ENCODE measurements at regions of chr10 and their contacts with region 1.

Region 1: GRCh38 chr10:95601116-95601719 is 40.0 kb upstream of the SORBS1 start:
- DNase-seq: peak; percentile 89
- H3K4me3 Mint-ChIP-seq: no peak overlapping the region
- H3K27ac Mint-ChIP-seq: no peak overlapping the region
- H3K4me1 Mint-ChIP-seq: no peaks in the 10 kb centered on the region
- H3K27me3 Mint-ChIP-seq: peaks cover 21% of the 10 kb centered on the region
- CTCF ChIP-seq: peak; percentile 87

Region 2: GRCh38 chr10:94997741-94998174 is 603.5 kb before region 1 on chr10:
- CTCF ChIA-PET with region 1: no interaction called
- POLR2A ChIA-PET with region 1: no interaction called
- intact Hi-C with region 1: no loop called
- DNase-seq: no peak
- H3K4me3 Mint-ChIP-seq: no peak overlapping the region
- H3K27ac Mint-ChIP-seq: no peak overlapping the region
- H3K4me1 Mint-ChIP-seq: no peaks in the 10 kb centered on the region
- H3K27me3 Mint-ChIP-seq: no peaks in the 10 kb centered on the region
- CTCF ChIP-seq: no peak

Region 3: DNA sequence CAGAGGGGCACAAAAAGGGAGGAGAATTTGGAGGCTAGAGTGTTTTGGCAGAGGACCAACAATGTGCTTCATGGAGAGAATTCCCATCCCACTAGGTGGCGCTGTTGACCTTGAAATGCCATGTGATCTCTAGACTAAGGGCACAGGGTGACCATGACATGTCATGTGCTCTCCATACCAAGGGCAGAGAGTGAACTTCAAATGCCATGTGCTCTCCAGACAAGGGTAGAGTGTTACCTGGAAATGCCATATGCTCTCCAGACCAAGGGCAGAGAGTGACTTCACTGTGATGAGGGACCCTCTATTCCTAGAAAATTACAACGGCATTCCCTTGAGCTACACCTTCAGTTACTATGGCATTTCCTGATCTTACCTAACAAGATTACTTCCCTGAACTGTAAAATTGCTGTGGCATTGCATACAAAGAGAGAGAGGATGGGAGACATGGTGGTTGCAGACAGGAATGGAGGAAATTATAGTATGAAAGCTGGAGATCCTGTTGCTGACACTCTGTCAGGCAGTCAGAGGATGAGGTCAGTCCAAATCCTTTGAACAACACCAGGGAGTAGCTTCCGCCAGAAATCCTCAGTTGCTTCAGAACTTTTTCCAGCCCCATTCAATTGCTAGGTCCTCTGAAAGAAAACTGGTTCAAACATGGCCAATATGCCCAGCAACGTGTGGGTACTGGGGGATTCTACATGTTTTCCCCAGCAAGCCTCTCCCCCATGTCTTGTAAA is 468.0 kb before region 1 on chr10:
- CTCF ChIA-PET with region 1: no interaction called
- POLR2A ChIA-PET with region 1: no interaction called
- intact Hi-C with region 1: loop called (anchors 1 kb)
- DNase-seq: peak; percentile 88
- H3K4me3 Mint-ChIP-seq: no peak overlapping the region
- H3K27ac Mint-ChIP-seq: no peak overlapping the region
- H3K4me1 Mint-ChIP-seq: no peaks in the 10 kb centered on the region
- H3K27me3 Mint-ChIP-seq: peaks cover 15% of the 10 kb centered on the region
- CTCF ChIP-seq: peak; percentile 71

Region 4: GRCh38 chr10:95388539-95388938 is 212.7 kb before region 1 on chr10:
- CTCF ChIA-PET with region 1: interaction called, 10 read pairs
- POLR2A ChIA-PET with region 1: interaction called, 3 read pairs
- intact Hi-C with region 1: no loop called
- DNase-seq: no peak
- H3K4me3 Mint-ChIP-seq: no peak overlapping the region
- H3K27ac Mint-ChIP-seq: no peak overlapping the region
- H3K4me1 Mint-ChIP-seq: peaks cover 1% of the 10 kb centered on the region
- H3K27me3 Mint-ChIP-seq: no peaks in the 10 kb centered on the region
- CTCF ChIP-seq: no peak

Region 5: DNA sequence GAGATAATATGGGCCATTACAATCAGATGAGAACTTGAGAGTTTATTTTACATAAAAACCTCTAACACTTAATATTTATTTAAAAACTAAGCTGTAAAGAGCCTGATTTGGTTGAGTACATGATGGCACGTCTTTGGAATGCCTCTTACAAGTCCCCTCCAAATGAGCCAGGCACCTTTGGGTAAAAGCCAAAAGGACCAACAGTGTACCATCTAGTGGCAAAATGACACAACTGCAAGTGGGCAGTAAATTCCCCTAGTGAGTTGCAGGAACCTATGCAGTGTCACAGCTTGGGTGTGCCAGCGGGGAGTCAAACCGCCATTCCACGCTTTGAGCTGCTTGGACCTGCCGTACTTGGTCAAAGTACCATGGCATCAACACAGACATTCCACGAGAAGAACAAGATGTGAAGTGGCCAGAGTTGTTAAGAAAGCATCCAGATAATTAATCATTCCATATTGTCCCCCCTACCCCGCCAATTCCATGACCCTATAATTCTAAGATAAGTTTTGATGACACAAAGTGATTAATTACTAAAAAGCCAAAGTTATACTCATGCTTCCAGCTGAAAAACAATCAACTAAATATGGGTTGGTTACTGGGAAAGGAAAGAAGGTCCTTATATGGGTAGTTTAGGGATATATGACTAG is 155.3 kb before region 1 on chr10:
- CTCF ChIA-PET with region 1: interaction called, 64 read pairs
- POLR2A ChIA-PET with region 1: no interaction called
- intact Hi-C with region 1: loop called (anchors 1 kb)
- DNase-seq: peak; percentile 82
- H3K4me3 Mint-ChIP-seq: no peak overlapping the region
- H3K27ac Mint-ChIP-seq: no peak overlapping the region
- H3K4me1 Mint-ChIP-seq: peaks cover 15% of the 10 kb centered on the region
- H3K27me3 Mint-ChIP-seq: no peaks in the 10 kb centered on the region
- CTCF ChIP-seq: peak; percentile 81

Region 6: DNA sequence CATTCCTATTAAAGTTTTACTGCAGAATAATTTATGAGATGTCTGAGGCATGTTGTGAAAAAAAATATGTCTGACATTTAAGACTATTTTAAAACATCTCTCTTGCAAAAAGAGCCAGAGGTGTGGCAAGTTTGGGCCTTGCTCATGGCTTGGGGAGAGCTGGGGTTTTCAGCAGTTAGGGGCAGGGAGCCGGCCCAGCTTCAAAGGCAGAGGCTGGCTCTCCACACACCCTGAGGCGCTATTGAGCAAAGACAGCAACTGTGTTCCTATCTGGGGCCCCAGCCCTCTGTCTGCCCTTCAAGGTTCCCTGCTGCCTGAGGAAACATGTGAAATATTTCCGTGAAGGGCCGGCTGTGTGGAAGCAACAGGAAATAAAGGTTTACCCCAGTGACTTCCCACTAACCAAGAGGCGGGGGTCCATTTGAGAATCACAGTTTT is 134.0 kb before region 1 on chr10:
- CTCF ChIA-PET with region 1: interaction called, 6 read pairs
- POLR2A ChIA-PET with region 1: interaction called, 3 read pairs
- intact Hi-C with region 1: loop called (anchors 1 kb)
- DNase-seq: peak; percentile 80
- H3K4me3 Mint-ChIP-seq: peak overlapping the region; percentile 8
- H3K27ac Mint-ChIP-seq: peak overlapping the region; percentile 64
- H3K4me1 Mint-ChIP-seq: peaks cover 14% of the 10 kb centered on the region
- H3K27me3 Mint-ChIP-seq: no peaks in the 10 kb centered on the region
- CTCF ChIP-seq: no peak

Region 7: DNA sequence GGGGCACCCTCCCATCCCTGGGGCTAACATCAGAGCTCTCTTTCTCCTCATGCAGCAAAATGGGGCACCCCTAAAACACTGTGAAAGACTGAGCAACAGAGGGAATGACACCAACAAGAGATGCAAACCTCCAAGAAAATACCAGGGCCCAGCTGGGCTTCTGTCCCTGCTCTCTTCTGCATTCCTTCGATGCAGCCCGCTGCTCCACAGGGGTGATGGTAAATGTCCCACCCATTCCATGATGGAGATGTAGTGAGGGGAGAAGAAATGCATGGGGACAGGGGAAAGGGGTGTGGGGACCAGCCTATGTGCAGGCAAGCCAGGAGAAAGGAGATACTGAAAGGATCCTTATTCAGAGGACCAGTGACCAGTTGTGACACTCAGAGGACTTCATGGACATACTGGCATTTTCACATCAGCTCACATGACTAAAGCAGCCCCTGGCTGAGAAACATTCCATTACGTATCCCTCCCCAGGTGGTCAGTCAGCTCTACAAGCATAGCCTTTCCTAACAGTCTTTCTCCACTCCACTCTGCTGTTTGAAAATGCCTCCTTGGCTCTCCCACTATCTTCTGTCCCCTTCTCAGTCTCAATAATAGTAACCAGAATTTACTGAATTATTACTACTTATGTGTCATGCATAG is 53.3 kb before region 1 on chr10:
- CTCF ChIA-PET with region 1: no interaction called
- POLR2A ChIA-PET with region 1: no interaction called
- intact Hi-C with region 1: no loop called
- DNase-seq: no peak
- H3K4me3 Mint-ChIP-seq: no peak overlapping the region
- H3K27ac Mint-ChIP-seq: no peak overlapping the region
- H3K4me1 Mint-ChIP-seq: no peaks in the 10 kb centered on the region
- H3K27me3 Mint-ChIP-seq: no peaks in the 10 kb centered on the region
- CTCF ChIP-seq: no peak

Region 8: GRCh38 chr10:95588025-95588424 is 13.2 kb before region 1 on chr10:
- CTCF ChIA-PET with region 1: interaction called, 11 read pairs
- POLR2A ChIA-PET with region 1: no interaction called
- intact Hi-C with region 1: no loop called
- DNase-seq: peak; percentile 27
- H3K4me3 Mint-ChIP-seq: no peak overlapping the region
- H3K27ac Mint-ChIP-seq: no peak overlapping the region
- H3K4me1 Mint-ChIP-seq: no peaks in the 10 kb centered on the region
- H3K27me3 Mint-ChIP-seq: peaks cover 10% of the 10 kb centered on the region
- CTCF ChIP-seq: no peak

Region 9: GRCh38 chr10:95613330-95613729 is 12.1 kb after region 1 on chr10:
- CTCF ChIA-PET with region 1: interaction called, 10 read pairs
- POLR2A ChIA-PET with region 1: no interaction called
- intact Hi-C with region 1: no loop called
- DNase-seq: no peak
- H3K4me3 Mint-ChIP-seq: no peak overlapping the region
- H3K27ac Mint-ChIP-seq: no peak overlapping the region
- H3K4me1 Mint-ChIP-seq: no peaks in the 10 kb centered on the region
- H3K27me3 Mint-ChIP-seq: no peaks in the 10 kb centered on the region
- CTCF ChIP-seq: no peak

Region 10: GRCh38 chr10:96073722-96074121 is 472.5 kb after region 1 on chr10:
- CTCF ChIA-PET with region 1: no interaction called
- POLR2A ChIA-PET with region 1: no interaction called
- intact Hi-C with region 1: no loop called
- DNase-seq: peak; percentile 68
- H3K4me3 Mint-ChIP-seq: no peak overlapping the region
- H3K27ac Mint-ChIP-seq: no peak overlapping the region
- H3K4me1 Mint-ChIP-seq: peaks cover 6% of the 10 kb centered on the region
- H3K27me3 Mint-ChIP-seq: no peaks in the 10 kb centered on the region
- CTCF ChIP-seq: no peak

Region 11: GRCh38 chr10:96618653-96619052 is 1017.4 kb after region 1 on chr10:
- CTCF ChIA-PET with region 1: no interaction called
- POLR2A ChIA-PET with region 1: no interaction called
- intact Hi-C with region 1: no loop called
- DNase-seq: peak; percentile 60
- H3K4me3 Mint-ChIP-seq: no peak overlapping the region
- H3K27ac Mint-ChIP-seq: peak overlapping the region; percentile 43
- H3K4me1 Mint-ChIP-seq: peaks cover 38% of the 10 kb centered on the region
- H3K27me3 Mint-ChIP-seq: no peaks in the 10 kb centered on the region
- CTCF ChIP-seq: no peak

Measured in MCF 10A (cell line).